ENCODE measurements at regions of chr3 and their contacts with region 1.

Region 1: GRCh38 chr3:24914036-24914435 is 419.4 kb upstream of the THRB start:
- DNase-seq: no peak
- ATAC-seq: no peak

Region 2: GRCh38 chr3:24299806-24300626 is 614.0 kb before region 1 on chr3:
- intact Hi-C with region 1: no loop called
- DNase-seq: no peak
- ATAC-seq: peak; percentile 10

Region 3: DNA sequence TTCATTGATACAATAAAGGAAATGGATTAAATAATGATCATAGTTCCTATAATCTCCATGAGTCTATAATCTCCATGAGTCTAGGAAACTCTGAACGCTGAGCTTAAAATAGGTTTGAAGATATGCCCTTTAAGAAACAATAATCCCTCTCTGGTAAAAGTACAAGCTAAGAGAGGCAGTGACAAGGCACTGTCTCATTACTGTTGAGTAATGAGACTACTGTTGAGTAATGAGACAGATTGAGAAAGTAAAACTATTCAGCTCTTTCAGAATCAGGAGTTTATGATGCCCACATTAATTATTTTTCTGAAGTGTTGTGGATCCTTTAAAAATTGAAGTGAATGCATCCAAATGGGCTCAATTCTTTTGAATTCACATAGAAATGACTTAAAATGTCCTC is 183.9 kb before region 1 on chr3:
- intact Hi-C with region 1: no loop called
- DNase-seq: no peak
- ATAC-seq: no peak

Region 4: GRCh38 chr3:24937228-24937627 is 23.2 kb after region 1 on chr3:
- intact Hi-C with region 1: loop called (anchors 1 kb)
- DNase-seq: no peak
- ATAC-seq: no peak

Region 5: DNA sequence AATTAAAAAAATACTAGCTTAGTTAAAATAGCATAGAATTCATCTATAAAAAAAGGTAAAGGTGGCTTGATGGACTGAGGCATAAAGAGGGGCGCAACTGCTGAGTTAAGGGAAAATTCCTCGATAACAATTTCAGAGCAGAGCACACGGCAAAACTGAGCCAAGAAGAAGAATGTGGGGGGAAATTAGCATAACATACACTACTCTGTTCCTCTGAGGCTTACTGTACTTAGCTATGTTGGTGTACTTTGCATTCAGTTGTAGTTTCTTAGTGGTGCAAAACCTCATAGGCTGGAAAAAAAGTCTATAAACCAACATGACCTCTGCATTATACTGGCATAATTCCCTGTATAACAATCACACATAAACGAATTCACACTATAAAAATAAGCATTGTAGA is 1350.7 kb after region 1 on chr3:
- intact Hi-C with region 1: no loop called
- DNase-seq: no peak
- ATAC-seq: no peak

Region 6: DNA sequence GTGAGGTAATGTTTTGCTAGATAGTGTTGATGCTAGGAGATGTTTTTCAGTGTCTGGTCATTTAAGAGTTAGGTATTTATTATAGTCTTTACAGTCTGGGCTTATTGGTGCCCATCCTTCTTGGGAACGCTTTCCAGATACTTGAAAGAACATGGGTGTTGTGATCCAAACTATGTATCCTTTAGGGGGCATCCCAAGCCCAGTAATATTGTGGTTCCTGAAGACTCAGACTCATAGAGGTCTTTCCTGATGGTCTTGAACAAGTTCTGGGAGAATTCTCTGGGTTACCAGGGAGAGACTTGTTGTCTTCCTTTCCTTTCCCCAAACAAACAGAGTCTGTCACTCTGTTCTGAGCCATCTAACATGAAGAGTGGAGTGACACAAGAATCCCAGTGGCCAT is 1608.9 kb after region 1 on chr3:
- intact Hi-C with region 1: loop called (anchors 10 kb)
- DNase-seq: no peak
- ATAC-seq: no peak

Measured in sciatic nerve (tissue), 2 donors.